Activated CD4-positive, alpha-beta T cell treated with anti-CD3 and anti-CD28 coated beads, Interleukin-2, amount 10 ng/mL, durations not matched to agents 24 days and 14 days (primary cell): ENCODE measurements at regions of chr19 and their contacts with region 1.

Region 1: DNA sequence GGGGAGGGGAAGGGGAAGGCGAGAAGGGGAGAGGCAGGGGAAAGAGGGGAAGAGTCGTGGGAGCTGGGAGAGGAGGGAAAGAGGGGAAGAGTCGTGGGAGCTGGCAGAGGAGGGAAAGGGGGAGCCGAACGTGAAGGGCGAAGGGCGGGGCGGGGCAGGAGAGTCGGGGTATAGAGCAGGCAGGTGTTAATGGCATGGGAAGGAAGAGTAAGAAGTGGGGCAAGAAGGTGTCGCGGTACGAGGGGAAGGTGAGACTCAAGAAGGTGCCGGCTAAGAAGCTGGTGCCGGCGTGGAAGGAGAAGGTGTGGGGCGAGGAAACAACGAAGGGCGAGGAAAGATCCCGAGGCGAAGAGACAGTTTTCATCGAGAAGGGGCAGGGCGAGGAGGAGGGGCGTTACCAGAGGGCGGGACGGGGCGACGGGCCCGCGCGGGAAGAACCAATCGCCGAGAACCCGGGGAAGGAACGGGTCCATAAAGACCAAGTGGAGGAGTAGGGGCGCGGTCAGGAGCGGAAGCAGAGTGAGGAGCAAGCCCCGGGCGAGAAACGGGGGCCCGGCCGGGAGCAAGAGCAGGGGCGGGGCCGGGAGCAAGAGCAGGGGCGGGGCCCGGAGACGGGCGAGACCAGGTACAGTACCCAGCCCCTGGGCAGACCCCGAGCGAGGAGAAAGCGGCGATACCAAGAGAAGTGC is 463 bp downstream of the CATSPERG start:
- DNase-seq: peak; percentile 98
- H3K4me3 Mint-ChIP-seq: peak overlapping the region; percentile 100
- H3K27ac Mint-ChIP-seq: peak overlapping the region; percentile 100
- H3K4me1 Mint-ChIP-seq: peaks cover 14% of the 10 kb centered on the region
- H3K27me3 Mint-ChIP-seq: no peaks in the 10 kb centered on the region

Region 2: GRCh38 chr19:37906869-37907734 is 429.0 kb before region 1 on chr19 and contains the start of gene SIPA1L3:
- intact Hi-C with region 1: loop called (anchors 1 kb)
- DNase-seq: peak; percentile 98
- H3K4me3 Mint-ChIP-seq: peak within 1 kb of the TSS; percentile 76
- H3K27ac Mint-ChIP-seq: peak within 1 kb of the TSS; percentile 79
- H3K4me1 Mint-ChIP-seq: peaks cover 18% of the 10 kb centered on the region
- H3K27me3 Mint-ChIP-seq: peaks cover 2% of the 10 kb centered on the region
- total RNA-seq, gene SIPA1L3: 15.2 and 15.4 TPM in 2 replicates

Region 3: DNA sequence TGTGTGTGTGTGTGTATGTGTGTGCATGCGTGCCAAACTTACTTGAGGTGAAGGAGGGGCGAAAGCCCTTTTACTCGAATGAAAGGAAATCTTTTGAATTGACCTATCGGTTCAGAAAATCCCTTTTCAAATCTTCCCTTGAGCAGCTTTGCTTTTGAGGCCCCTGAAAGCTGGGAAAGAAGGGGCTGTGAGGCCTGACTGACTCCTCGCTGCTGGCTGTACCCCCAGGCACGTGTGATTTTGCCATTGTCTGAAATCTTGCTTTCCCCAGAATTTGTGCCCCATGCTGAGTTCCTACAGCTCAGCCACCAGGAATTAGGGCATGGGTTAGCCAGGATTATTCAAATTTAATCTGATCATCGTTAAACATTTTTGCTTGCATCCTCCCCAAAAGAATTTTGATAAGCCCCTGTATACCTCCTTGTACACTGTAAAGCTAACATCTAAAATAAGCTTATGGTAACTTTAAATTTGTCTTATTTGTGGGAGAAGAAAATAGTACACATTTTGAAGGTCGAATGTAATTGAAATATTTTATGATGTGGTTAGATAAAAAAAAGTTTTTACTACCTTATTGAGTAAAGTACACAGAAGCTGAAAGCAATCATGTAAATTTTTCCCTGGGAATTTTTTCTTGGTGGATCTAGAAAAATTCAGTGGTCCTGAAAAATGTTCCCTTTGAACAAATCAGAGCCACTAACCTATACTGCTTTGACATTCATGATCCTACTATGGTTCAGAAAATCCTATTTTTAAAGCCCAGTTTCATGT is 382.4 kb before region 1 on chr19:
- intact Hi-C with region 1: no loop called
- DNase-seq: no peak
- H3K4me3 Mint-ChIP-seq: no peak overlapping the region
- H3K27ac Mint-ChIP-seq: no peak overlapping the region
- H3K4me1 Mint-ChIP-seq: no peaks in the 10 kb centered on the region
- H3K27me3 Mint-ChIP-seq: no peaks in the 10 kb centered on the region

Region 4: GRCh38 chr19:38245826-38246498 is 90.1 kb before region 1 on chr19:
- intact Hi-C with region 1: loop called (anchors 1 kb)
- DNase-seq: no peak
- H3K4me3 Mint-ChIP-seq: no peak overlapping the region
- H3K27ac Mint-ChIP-seq: no peak overlapping the region
- H3K4me1 Mint-ChIP-seq: peaks cover 10% of the 10 kb centered on the region
- H3K27me3 Mint-ChIP-seq: no peaks in the 10 kb centered on the region

Region 5: GRCh38 chr19:38315657-38316476 is 20.2 kb before region 1 on chr19 and contains the start of gene YIF1B:
- intact Hi-C with region 1: loop called (anchors 1 kb)
- DNase-seq: peak; percentile 98
- H3K4me3 Mint-ChIP-seq: peak within 1 kb of the TSS; percentile 89
- H3K27ac Mint-ChIP-seq: peak within 1 kb of the TSS; percentile 94
- H3K4me1 Mint-ChIP-seq: peaks cover 47% of the 10 kb centered on the region
- H3K27me3 Mint-ChIP-seq: no peaks in the 10 kb centered on the region
- total RNA-seq, gene YIF1B: 83.4 and 84.7 TPM in 2 replicates

Region 6: GRCh38 chr19:38374429-38375176 is 38.5 kb after region 1 on chr19 and contains the start of gene PSMD8:
- intact Hi-C with region 1: loop called (anchors 1 kb)
- DNase-seq: peak; percentile 100
- H3K4me3 Mint-ChIP-seq: peak within 1 kb of the TSS; percentile 100
- H3K27ac Mint-ChIP-seq: peak within 1 kb of the TSS; percentile 98
- H3K4me1 Mint-ChIP-seq: peaks cover 21% of the 10 kb centered on the region
- H3K27me3 Mint-ChIP-seq: no peaks in the 10 kb centered on the region
- total RNA-seq, gene PSMD8: 314 and 315 TPM in 2 replicates

Region 7: GRCh38 chr19:38402967-38403861 is 67.1 kb after region 1 on chr19 and contains the start of gene FAM98C:
- intact Hi-C with region 1: loop called (anchors 1 kb)
- DNase-seq: peak; percentile 99
- H3K4me3 Mint-ChIP-seq: peak within 1 kb of the TSS; percentile 95
- H3K27ac Mint-ChIP-seq: peak within 1 kb of the TSS; percentile 95
- H3K4me1 Mint-ChIP-seq: peaks cover 12% of the 10 kb centered on the region
- H3K27me3 Mint-ChIP-seq: peaks cover 2% of the 10 kb centered on the region
- total RNA-seq, gene FAM98C: 25.3 and 30.4 TPM in 2 replicates

Region 8: GRCh38 chr19:38899447-38900219 is 563.5 kb after region 1 on chr19 and contains the starts of genes NFKBIB and SIRT2:
- intact Hi-C with region 1: loop called (anchors 5 kb)
- DNase-seq: peak; percentile 100
- H3K4me3 Mint-ChIP-seq: peak within 1 kb of the TSS; percentile 93
- H3K27ac Mint-ChIP-seq: peak within 1 kb of the TSS; percentile 95
- H3K4me1 Mint-ChIP-seq: peaks cover 37% of the 10 kb centered on the region
- H3K27me3 Mint-ChIP-seq: no peaks in the 10 kb centered on the region
- total RNA-seq, gene NFKBIB: 89.2 and 89.7 TPM in 2 replicates
- total RNA-seq, gene SIRT2: 23.6 and 30.1 TPM in 2 replicates